ENCODE measurements at regions of chr3 and their contacts with region 1.

Region 1: DNA sequence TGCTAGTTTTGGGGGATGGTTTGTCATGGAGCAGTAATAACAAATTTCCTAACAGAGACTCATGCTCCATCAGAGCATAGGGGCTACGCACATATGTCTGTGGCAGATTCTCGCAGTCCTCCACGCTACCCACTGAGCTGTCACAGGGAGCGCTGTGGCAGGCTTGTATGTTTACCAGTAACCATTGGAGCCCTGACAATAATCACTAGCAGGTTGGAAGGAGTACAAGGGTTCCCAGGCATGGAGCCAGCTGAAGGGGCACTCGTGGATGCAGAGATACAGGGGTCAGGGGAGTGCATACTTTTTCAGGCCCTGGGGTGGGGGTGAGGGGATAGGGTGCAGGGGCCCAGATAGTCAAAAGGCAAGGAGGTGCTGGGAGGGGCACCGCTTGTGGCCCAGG is 7.9 kb upstream of the GP9 start:
- DNase-seq: no peak
- H3K4me3 Mint-ChIP-seq: no peak overlapping the region
- H3K27ac Mint-ChIP-seq: peak overlapping the region; percentile 28
- H3K4me1 Mint-ChIP-seq: peaks cover 7% of the 10 kb centered on the region
- H3K27me3 Mint-ChIP-seq: peaks cover 18% of the 10 kb centered on the region

Region 2: DNA sequence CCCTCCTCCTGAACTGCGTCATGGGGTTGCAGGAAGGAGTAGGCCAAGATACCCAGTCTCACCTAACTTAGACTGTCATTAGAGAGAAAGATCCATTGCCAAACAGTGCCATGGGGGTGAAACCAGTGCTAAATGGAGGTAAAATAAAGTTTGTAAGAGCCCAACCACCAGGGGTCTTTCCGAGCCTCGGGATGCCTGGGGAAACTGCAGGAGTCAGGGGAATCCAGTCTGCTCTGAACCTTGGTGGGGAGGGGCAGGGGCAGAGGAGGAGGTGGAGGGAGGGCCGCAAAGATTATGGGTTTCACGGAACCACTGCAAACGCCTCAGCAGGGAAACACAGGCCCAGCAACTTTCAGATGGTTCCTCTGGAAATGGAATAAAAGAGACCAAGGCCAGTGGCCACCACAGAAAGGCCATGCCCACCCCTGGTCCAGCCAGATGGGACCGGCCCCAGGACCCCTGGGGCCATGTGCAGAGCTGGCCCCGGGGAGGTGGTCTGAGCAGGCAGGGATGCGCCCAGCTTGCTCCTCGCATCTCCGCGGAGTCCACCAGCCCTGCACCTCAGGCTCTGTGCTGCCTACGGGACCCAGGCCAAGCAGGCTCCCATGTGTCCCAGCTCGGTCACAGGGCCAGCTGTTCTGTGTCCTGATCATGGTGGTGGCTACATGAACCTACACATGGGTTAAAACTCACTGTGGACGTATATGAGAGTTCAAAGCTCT is 11.9 kb before region 1 on chr3:
- CTCF ChIA-PET with region 1: interaction called, 13 read pairs
- POLR2A ChIA-PET with region 1: no interaction called
- DNase-seq: no peak
- H3K4me3 Mint-ChIP-seq: no peak overlapping the region
- H3K27ac Mint-ChIP-seq: no peak overlapping the region
- H3K4me1 Mint-ChIP-seq: peaks cover 7% of the 10 kb centered on the region
- H3K27me3 Mint-ChIP-seq: peaks cover 39% of the 10 kb centered on the region

Region 3: DNA sequence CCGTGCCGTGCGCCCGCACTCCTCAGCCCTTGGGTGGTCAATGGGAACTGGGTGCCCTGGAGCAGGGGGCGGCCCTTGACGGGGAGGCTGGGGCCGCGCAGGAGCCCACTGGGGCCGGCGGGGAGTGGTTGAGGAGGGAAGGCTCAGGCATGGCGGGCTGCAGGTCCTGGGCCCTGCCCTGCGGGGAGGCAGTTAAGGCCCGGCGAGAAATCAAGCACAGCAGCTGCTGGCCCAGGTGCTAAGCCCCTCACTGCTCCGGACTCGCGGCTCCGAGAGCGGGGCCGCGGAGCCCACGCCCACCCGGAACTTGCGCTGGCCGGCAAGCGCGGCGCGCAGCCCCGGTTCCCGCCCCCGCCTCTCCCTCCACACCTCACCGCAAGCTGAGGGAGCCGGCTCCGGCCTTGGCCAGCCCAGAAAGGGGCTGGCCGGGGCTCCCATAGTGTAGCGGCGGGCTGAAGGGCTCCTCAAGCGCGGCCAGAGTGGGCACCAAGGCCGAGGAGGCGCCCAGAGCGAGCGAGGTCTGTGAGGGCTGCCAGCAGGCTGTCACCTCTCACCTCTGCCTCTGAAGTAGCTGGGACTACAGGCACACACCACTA is 15.7 kb after region 1 on chr3:
- CTCF ChIA-PET with region 1: interaction called, 31 read pairs
- POLR2A ChIA-PET with region 1: interaction called, 8 read pairs
- DNase-seq: no peak
- H3K4me3 Mint-ChIP-seq: no peak overlapping the region
- H3K27ac Mint-ChIP-seq: no peak overlapping the region
- H3K4me1 Mint-ChIP-seq: peaks cover 8% of the 10 kb centered on the region
- H3K27me3 Mint-ChIP-seq: peaks cover 18% of the 10 kb centered on the region